ENCODE measurements at regions of chr1 and their contacts with region 1.

Region 1: GRCh38 chr1:5125208-5125607 is 470.8 kb downstream of the AJAP1 start:
- DNase-seq: no peak
- ATAC-seq: no peak

Region 2: DNA sequence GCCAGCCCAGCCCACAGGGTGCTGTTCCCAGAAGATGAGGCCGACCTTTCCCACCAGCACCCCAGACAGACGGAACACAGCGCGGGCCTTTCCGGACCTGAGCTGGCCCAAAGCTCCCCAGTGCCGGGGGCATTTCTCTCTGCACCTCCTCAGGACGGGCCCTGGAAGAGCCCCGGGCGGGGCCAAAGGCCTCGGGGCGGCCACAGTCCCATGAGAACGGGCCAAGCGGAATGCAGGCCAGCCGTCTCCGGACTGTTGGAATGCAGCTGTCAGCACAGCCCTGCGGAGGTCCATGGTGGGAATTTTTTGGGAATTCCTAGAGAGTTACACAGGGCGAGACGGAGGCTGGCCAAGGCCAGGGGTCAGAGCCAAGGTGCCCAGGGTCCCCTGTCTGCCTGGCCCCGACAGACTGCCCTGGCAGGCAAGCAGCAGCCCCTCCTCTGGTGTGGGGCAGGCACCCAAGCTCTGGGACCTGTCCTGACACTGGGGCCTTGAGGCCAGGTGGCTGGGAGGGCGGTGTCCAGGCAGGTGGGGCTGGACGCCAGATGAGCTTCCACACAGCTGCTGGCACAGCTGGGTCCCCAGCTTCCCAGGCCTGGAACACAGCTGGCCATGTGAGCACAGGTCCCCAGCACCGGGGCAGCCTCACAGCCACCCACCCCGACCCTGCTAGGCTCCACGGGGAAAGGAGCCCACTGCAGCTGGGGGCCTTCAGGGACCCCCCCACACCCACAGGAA is 1576.9 kb before region 1 on chr1:
- intact Hi-C with region 1: loop called (anchors 5 kb)
- DNase-seq: no peak
- ATAC-seq: no peak

Region 3: GRCh38 chr1:4071653-4072052 is 1053.6 kb before region 1 on chr1:
- intact Hi-C with region 1: no loop called
- DNase-seq: no peak
- ATAC-seq: no peak